ENCODE measurements at regions of chr1 and their contacts with region 1.

Region 1: DNA sequence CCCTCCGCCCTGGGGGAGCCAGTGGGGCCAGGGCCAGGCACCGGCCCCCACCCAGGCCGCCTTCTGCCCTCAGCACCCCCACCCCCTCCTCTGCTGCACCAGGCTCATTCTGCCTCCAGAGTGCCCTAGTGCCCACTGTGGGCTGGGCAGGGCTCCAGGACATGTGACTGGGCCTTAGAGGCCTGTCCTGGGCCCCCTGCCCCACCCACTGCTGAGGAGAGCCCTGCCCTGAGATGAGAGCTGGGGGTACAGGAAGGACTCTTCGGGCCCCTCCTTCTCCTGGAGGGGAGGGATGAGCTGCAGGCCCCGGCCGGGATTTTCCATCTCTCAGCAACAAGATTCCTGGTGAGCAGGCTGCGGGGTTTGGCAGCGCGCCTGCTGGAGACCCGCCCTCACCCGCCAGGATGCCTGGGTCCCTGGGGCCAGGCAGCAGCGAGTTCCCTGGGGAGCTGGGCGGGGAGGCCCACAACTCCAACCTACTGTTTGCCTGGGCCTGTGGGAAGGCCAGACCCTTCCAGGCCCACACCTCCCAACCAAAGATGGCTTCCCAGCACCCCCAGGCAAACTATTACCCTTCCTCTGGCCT is 14.0 kb downstream of the AHDC1 start:
- DNase-seq: no peak
- H3K4me3 ChIP-seq: no peak overlapping the region
- H3K27ac ChIP-seq: peak overlapping the region in 1 of 2 experiments; percentile 3
- H3K4me1 ChIP-seq: peaks cover 0 to 46% (median 36%) of the 10 kb centered on the region in 4 experiments
- H3K27me3 ChIP-seq: no peaks in the 10 kb centered on the region

Region 2: GRCh38 chr1:27519331-27520258 is 70.3 kb before region 1 on chr1:
- CTCF ChIA-PET with region 1: no interaction called
- POLR2A ChIA-PET with region 1: no interaction called
- DNase-seq: no peak
- H3K4me3 ChIP-seq: no peak overlapping the region
- H3K27ac ChIP-seq: no peak overlapping the region
- H3K4me1 ChIP-seq: peaks cover 8 to 57% (median 45%) of the 10 kb centered on the region in 4 experiments
- H3K27me3 ChIP-seq: no peaks in the 10 kb centered on the region

Region 3: DNA sequence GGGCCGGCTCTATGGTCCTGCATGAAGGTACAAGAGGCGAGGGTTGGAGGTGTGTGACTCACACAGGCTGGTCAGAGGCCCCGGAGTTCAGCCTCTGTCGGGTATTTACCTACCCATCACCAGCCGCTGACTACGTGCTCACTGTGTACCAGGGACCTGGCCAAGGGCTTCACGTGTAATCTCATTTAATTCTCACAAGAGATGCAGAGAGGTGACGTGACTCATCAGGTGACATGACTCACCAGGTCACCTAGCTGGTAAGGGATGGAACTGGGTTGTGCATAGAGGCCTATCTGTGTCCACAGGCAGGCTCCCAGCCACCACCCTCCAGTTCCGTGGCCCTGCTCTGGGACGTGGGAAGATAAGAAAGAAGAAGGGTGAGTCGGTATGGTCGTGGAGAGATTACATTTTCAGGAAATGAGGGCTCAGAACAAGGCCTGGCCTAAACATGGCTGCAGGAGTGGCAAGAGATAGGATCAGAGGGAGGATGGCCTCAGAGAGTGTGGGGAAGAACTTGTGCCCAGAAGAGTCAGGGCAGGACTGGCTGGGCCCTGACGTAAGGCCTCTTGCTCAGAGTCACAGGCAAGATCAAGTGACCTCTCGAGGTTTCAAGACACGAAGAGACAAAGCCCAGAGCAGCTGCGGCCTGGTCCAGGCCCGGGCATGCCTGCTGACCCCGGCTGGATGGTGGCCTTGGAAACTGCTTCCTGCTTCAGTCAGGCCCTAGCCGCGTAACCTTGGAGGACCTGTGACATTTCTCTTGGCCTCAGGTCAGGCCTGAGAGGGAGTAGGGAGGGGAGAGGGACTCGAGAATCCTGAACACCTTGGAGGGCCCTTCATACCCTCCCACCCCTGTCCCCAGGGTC is 47.3 kb before region 1 on chr1:
- CTCF ChIA-PET with region 1: no interaction called
- POLR2A ChIA-PET with region 1: no interaction called
- DNase-seq: peak; percentile 78 to 91 (median 82)
- H3K4me3 ChIP-seq: no peak overlapping the region
- H3K27ac ChIP-seq: peak overlapping the region in 1 of 2 experiments; percentile 81
- H3K4me1 ChIP-seq: peaks cover 0 to 17% (median 8%) of the 10 kb centered on the region in 4 experiments
- H3K27me3 ChIP-seq: no peaks in the 10 kb centered on the region

Region 4: DNA sequence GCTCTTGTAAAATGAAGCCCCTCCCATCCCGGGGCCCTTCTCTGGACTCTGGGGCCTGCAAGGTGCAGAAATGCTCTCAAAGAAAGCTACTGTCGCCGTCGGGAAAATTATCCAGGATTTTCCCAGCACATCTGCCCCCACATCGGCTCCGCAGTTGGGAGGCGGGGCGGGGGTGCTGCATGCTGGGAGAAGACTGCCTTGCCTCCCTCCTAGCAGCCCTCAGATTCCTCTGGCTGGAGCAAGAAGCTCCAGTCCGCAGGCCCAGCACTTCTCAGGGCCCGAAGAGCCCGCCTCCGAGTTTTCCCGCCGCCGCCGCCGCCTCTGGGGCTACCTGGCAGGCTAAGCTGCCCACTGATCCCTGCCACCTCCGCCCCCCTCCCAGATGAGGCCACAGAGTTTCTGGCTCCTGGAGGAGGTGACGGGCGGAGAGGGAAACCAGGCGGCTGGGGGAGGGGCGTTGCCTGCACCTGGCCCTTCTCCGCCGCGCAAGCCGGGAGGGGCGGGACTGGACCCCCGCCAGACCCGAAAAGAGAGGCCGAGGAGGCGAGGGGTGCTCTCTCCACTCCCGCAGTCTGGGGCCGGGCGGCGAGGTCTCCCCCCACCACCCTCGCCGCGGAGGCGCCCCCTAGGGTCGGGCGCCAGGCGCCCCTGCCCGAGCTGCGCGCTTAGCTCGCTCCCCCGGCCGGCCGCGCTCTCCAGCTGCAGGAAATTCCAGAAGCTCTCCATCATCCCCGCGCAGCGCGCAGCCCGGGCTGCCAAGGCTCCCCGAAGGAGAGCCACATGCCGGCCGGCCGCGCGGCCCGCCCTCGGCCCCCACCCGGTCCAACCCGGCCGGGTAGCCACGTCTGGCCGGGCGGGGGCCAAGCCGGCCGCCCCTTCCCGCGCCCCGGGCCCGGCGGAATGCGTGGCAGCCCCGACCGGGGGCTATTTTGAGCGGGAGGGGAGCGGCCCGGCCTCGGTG is 14.8 kb before region 1 on chr1:
- CTCF ChIA-PET with region 1: interaction called, 66 read pairs
- POLR2A ChIA-PET with region 1: no interaction called
- DNase-seq: peak; percentile 39 to 62 (median 54)
- H3K4me3 ChIP-seq: peak overlapping the region in 5 of 7 experiments; percentile 23 to 74 (median 52)
- H3K27ac ChIP-seq: no peak overlapping the region
- H3K4me1 ChIP-seq: peaks cover 7 to 89% (median 68%) of the 10 kb centered on the region in 4 experiments
- H3K27me3 ChIP-seq: no peaks in the 10 kb centered on the region

Region 5: DNA sequence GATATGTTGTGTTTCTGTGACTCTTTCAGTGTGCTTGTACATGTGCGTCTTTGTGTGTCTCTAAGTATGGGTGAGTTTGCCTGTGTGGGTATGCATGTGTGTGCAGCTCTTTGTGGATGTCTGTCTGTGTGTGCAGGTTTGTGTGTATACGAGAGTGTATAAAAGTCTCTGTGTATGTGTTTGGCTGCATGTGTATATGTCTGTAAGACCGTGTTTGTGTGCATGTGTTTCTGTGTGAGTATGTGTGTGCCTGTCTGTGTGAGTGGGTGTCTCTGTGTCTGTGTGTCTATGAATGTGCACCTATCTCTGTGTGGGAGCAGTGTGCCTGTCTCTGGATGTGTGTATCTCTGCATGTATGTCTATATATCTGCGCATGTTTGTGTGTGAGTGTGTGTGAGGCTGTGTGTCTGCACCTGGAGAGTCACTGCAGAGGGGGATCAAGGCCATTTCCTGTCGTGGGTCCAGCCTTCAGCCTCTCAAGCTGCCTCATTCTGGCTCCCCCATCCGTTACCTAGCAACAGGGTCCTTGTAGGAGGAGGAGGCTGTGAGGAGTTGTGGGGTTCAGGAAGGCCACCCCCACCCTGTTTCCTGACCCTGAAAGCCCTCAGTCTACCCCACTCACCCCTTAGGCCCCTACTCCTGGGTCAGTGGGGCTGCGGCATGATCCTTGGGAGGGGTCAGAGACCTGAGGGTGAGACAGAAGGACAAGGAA is 34.7 kb after region 1 on chr1:
- CTCF ChIA-PET with region 1: no interaction called
- POLR2A ChIA-PET with region 1: no interaction called
- DNase-seq: peak in 2 of 3 donors; percentile 63 to 79
- H3K4me3 ChIP-seq: peak overlapping the region in 4 of 7 experiments; percentile 0 to 19 (median 18)
- H3K27ac ChIP-seq: peak overlapping the region; percentile 60 to 78
- H3K4me1 ChIP-seq: peaks cover 32 to 83% (median 61%) of the 10 kb centered on the region in 4 experiments
- H3K27me3 ChIP-seq: no peaks in the 10 kb centered on the region